Activated naive CD4-positive, alpha-beta T cell treated with anti-CD3 and anti-CD28 coated beads for 36 hours (primary cell): ENCODE measurements at regions of chr5 and their contacts with region 1.

Region 1: DNA sequence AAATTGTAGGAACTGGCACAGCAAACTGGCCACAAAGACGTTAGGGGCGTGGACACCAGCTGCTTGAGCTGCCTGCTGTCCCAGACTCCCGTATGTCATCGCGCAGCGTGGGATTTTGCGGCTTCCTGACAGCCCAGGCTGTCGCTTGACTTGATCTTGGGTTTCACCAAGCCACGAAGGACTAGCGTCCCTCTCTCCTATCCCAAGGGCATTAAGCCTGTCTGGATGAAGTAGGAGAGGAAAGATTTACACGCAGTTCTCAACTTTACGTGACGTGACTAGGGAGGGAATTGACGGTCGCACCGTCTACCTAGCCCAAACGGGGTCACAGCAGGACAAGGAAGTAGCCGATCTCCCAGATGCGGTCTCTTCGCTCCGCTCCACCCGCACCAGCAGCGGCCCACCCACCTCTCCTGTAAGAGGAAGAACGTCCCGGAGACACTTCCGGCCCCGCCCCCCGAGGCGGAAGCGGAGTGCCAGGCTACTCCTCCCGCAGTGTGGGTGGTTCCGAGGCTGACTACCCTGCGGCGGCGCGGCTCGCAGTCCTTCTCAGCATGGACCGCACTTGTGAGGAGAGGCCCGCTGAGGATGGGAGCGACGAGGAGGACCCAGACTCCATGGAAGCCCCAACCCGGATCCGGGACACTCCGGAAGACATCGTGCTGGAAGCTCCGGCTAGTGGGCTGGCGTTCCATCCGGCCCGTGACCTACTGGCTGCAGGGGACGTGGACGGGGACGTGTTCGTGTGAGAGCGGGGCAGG is at the start of gene WDR55:
- DNase-seq: peak; percentile 97
- H3K4me3 Mint-ChIP-seq: peak within 1 kb of the TSS; percentile 97
- H3K27ac Mint-ChIP-seq: peak within 1 kb of the TSS; percentile 91
- H3K4me1 Mint-ChIP-seq: peaks cover 33% of the 10 kb centered on the region
- H3K27me3 Mint-ChIP-seq: no peaks in the 10 kb centered on the region
- total RNA-seq, gene WDR55: 18.9 to 19.8 TPM

Region 2: GRCh38 chr5:140174465-140175366 is 489.8 kb before region 1 on chr5 and contains the start of gene CYSTM1:
- CTCF ChIA-PET with region 1: no interaction called
- intact Hi-C with region 1: loop called (anchors 1 kb)
- DNase-seq: peak; percentile 97
- H3K4me3 Mint-ChIP-seq: peak within 1 kb of the TSS; percentile 92
- H3K27ac Mint-ChIP-seq: peak within 1 kb of the TSS; percentile 66
- H3K4me1 Mint-ChIP-seq: peaks cover 12% of the 10 kb centered on the region
- H3K27me3 Mint-ChIP-seq: peaks cover 2% of the 10 kb centered on the region
- total RNA-seq, gene CYSTM1: 22.3 to 25.1 TPM

Region 3: GRCh38 chr5:140647042-140647341 is 17.5 kb before region 1 on chr5:
- CTCF ChIA-PET with region 1: no interaction called
- intact Hi-C with region 1: loop called (anchors 1 kb)
- DNase-seq: no peak
- H3K4me3 Mint-ChIP-seq: peak overlapping the region; percentile 100
- H3K27ac Mint-ChIP-seq: peak overlapping the region; percentile 99
- H3K4me1 Mint-ChIP-seq: peaks cover 40% of the 10 kb centered on the region
- H3K27me3 Mint-ChIP-seq: no peaks in the 10 kb centered on the region

Region 4: DNA sequence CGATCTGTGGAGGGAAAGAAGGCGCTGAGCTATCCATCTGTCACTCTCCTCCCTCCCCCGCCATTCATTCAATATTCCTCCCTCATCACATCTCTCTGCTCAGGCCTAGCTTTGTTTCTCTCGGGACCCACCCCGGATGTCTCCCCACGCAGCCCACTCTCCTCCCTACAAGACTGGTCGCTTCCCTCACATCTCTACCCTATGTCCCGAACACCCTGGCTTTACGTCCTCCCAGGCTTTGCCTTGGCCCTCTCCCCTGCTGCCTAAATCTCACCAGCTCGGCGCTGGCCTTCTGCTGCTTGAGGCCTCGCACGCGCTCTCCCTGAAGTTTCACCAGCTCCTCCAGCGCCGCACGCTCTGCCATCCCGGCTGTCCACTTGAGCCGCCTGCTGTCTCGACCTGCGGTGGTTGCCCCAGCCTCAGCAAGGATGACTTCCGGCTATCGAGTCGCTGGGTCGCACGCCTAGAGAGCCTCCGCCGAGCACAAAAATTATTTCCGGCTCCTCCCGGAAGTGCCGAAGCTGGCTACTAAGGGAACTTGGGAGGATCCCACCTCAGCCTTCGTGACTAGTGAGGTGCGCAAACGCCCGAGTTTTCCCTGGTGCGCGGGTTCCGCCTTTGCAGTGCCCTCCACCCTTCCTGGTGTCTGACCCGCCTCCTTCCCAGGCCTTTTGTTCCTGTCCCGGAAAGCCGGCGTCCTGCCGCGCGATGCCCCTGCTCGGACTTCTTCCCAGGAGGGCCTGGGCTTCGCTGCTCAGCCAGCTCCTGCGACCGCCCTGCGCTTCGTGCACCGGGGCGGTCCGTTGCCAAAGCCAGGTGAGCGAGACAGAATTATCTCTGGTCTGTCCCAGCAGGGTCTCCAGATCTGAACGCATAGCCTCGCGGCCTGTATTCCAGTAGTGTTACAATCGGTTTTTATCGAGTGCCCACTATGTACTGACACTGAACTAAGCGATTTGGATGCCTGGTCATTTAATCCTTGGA is 26.7 kb after region 1 on chr5 and contains the starts of genes HARS1 and HARS2:
- CTCF ChIA-PET with region 1: interaction called, 3 read pairs
- intact Hi-C with region 1: loop called (anchors 1 kb)
- DNase-seq: peak; percentile 92
- H3K4me3 Mint-ChIP-seq: peak within 1 kb of the TSS; percentile 100
- H3K27ac Mint-ChIP-seq: peak within 1 kb of the TSS; percentile 97
- H3K4me1 Mint-ChIP-seq: peaks cover 35% of the 10 kb centered on the region
- H3K27me3 Mint-ChIP-seq: no peaks in the 10 kb centered on the region
- total RNA-seq, gene HARS1: 69.0 to 74.8 TPM
- total RNA-seq, gene HARS2: 27.4 to 29.3 TPM

Region 5: DNA sequence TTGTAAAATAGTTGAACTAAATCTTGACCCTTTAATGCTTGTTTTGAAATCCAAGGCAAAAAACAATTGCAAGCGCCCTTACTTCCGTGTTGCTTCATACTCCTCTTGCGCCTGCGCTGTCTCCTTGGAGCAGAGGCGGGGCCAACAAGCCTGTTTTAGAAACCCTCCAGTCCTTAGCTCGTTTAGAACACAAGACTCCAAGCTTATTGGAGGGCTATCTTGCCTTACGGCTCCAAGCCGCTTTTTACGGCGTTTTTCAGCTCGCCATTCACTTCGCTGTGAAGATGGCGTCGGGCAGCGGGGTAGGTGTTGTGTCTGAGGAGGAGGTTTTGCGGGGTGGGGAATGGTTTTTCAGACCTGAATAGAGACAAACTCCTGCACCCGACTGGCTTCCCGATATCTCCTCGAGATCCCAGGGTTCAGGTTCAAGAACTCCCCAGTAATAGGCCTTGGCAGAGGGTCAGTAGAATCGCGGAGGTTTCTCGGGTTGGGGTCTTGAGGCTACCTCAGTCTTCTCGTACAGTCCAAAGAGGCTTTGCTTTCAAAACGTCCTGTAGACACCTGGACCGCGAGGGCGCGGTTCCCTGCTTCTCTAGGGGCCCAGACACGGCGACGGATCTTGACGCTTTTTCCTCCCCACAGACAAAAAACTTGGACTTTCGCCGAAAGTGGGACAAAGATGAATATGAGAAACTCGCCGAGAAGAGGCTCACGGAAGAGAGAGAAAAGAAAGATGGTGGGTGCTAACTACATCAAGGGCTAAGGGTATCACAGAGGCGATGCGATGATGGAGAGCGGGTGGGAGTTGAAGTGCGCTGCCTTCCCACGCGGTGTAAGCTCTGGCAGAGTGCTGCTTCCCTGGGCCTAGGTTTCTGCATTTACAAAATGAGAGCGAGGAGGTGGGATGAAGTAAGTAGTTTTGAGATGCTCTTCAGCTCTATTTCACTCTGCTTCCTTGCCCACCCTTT is 35.9 kb after region 1 on chr5 and contains the start of gene ZMAT2:
- CTCF ChIA-PET with region 1: no interaction called
- intact Hi-C with region 1: loop called (anchors 1 kb)
- DNase-seq: peak; percentile 97
- H3K4me3 Mint-ChIP-seq: peak within 1 kb of the TSS; percentile 97
- H3K27ac Mint-ChIP-seq: peak within 1 kb of the TSS; percentile 87
- H3K4me1 Mint-ChIP-seq: peaks cover 24% of the 10 kb centered on the region
- H3K27me3 Mint-ChIP-seq: no peaks in the 10 kb centered on the region
- total RNA-seq, gene ZMAT2: 52.9 to 58.8 TPM